Ovary (tissue), 10 donors: ENCODE measurements at regions of chr6 and their contacts with region 1.

Region 1: GRCh38 chr6:27838058-27838944 is 73.9 kb downstream of the OR2B2 start:
- DNase-seq: peak; percentile 80 to 88 (median 85)
- H3K4me3 ChIP-seq: peak overlapping the region; percentile 74
- H3K27ac ChIP-seq: peak overlapping the region; percentile 80 to 100
- H3K4me1 ChIP-seq: peaks cover 5% of the 10 kb centered on the region
- H3K27me3 ChIP-seq: no peaks in the 10 kb centered on the region
- CTCF ChIP-seq: peak; percentile 14 to 75 (median 72)
- EP300 ChIP-seq: peak; percentile 27
- POLR2A ChIP-seq: peak; percentile 97

Region 2: GRCh38 chr6:27260369-27260768 is 577.9 kb before region 1 on chr6:
- intact Hi-C with region 1: no loop called
- DNase-seq: no peak
- H3K4me3 ChIP-seq: no peak overlapping the region
- H3K27ac ChIP-seq: no peak overlapping the region
- H3K4me1 ChIP-seq: peaks cover 2% of the 10 kb centered on the region
- H3K27me3 ChIP-seq: no peaks in the 10 kb centered on the region
- CTCF ChIP-seq: no peak
- EP300 ChIP-seq: no peak
- POLR2A ChIP-seq: no peak

Region 3: DNA sequence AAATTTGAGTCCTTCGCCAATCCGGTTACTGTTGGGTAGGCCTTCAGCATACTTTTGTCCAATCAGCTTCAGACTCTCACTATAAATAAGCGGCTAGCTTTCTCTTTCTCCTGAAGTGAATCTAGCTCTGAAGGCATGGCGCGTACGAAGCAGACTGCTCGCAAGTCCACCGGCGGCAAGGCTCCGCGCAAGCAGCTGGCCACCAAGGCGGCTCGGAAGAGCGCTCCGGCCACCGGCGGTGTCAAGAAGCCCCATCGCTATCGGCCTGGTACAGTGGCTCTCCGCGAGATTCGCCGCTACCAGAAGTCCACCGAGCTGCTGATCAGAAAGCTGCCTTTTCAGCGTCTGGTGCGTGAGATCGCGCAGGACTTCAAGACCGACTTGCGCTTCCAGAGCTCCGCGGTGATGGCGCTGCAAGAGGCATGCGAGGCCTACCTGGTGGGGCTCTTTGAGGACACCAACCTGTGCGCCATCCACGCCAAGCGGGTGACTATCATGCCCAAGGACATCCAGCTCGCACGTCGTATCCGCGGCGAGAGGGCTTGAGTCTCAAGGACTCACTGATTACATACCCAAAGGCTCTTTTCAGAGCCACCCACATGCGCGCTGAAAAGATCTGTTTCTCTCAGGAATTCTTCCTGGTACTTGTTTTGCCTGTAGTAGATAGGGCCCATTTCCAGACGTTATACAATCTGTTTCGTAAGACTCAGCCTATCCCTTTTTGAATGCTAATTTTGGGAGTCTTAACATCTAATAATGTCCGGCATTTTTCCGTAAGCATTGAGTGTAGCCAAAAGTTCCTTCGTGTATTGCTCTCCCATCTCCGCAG is 28.1 kb before region 1 on chr6:
- intact Hi-C with region 1: loop called in 1 of 4 experiments (anchors 2 kb)
- DNase-seq: peak; percentile 82 to 90 (median 85)
- H3K4me3 ChIP-seq: peak overlapping the region; percentile 46
- H3K27ac ChIP-seq: peak overlapping the region; percentile 48 to 92
- H3K4me1 ChIP-seq: peaks cover 7% of the 10 kb centered on the region
- H3K27me3 ChIP-seq: no peaks in the 10 kb centered on the region
- CTCF ChIP-seq: peak in 1 of 3 donors; percentile 42
- EP300 ChIP-seq: no peak
- POLR2A ChIP-seq: peak; percentile 97

Region 4: GRCh38 chr6:27864906-27865849 is 26.9 kb after region 1 on chr6:
- intact Hi-C with region 1: loop called in 1 of 4 experiments (anchors 2 kb)
- DNase-seq: peak; percentile 31 to 65 (median 55)
- H3K4me3 ChIP-seq: peak overlapping the region; percentile 63
- H3K27ac ChIP-seq: no peak overlapping the region
- H3K4me1 ChIP-seq: peaks cover 14% of the 10 kb centered on the region
- H3K27me3 ChIP-seq: no peaks in the 10 kb centered on the region
- CTCF ChIP-seq: no peak
- EP300 ChIP-seq: no peak
- POLR2A ChIP-seq: peak; percentile 48

Region 5: DNA sequence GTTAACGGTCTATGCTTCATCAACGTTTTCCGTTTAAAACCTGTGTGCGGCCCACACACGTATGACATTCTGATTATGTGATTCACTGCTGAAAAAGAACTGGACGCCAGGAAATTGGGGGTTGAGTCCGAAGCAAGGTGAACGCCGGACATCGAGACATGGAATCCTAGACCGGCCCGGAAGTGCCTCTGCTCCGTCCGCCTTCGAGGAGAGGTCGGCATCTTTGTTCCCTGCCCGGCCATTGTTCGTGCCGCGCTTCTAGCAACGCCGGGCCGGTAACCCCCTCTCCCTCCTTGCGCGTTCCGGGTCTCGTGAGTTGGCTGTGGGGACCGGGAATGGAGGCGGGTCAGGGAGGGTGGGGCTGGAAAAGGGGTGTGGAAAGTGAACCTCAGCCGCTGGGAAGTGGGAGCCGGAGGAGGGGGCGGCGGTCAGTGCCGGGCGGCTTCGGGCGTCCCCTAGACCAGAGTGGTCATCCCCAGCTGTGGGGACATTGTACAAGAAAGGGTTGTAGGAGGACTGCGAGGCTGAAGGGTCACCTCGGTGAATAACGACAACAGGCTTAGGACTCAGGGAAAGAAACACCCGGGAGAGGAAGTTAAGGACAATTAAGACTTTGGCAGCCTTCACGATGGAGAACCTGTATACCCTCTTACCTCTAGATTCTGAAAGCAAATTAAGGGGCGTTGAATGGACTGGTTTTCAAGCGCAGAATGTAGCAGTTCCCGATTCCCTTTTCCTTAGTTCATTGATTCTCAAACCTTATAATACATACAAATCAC is 386.9 kb after region 1 on chr6 and contains the start of gene ZSCAN9:
- intact Hi-C with region 1: no loop called
- DNase-seq: peak; percentile 83 to 92 (median 85)
- H3K4me3 ChIP-seq: peak within 1 kb of the TSS; percentile 89
- H3K27ac ChIP-seq: peak within 1 kb of the TSS in 1 of 2 donors; percentile 33
- H3K4me1 ChIP-seq: peaks cover 1% of the 10 kb centered on the region
- H3K27me3 ChIP-seq: no peaks in the 10 kb centered on the region
- CTCF ChIP-seq: no peak
- EP300 ChIP-seq: no peak
- POLR2A ChIP-seq: peak; percentile 20
- total RNA-seq, gene ZSCAN9: 10.0 to 17.5 (median 13.7) TPM